Dorsolateral prefrontal cortex (tissue), 120 donors: ENCODE measurements at regions of chr14 and their contacts with region 1.

Region 1: DNA sequence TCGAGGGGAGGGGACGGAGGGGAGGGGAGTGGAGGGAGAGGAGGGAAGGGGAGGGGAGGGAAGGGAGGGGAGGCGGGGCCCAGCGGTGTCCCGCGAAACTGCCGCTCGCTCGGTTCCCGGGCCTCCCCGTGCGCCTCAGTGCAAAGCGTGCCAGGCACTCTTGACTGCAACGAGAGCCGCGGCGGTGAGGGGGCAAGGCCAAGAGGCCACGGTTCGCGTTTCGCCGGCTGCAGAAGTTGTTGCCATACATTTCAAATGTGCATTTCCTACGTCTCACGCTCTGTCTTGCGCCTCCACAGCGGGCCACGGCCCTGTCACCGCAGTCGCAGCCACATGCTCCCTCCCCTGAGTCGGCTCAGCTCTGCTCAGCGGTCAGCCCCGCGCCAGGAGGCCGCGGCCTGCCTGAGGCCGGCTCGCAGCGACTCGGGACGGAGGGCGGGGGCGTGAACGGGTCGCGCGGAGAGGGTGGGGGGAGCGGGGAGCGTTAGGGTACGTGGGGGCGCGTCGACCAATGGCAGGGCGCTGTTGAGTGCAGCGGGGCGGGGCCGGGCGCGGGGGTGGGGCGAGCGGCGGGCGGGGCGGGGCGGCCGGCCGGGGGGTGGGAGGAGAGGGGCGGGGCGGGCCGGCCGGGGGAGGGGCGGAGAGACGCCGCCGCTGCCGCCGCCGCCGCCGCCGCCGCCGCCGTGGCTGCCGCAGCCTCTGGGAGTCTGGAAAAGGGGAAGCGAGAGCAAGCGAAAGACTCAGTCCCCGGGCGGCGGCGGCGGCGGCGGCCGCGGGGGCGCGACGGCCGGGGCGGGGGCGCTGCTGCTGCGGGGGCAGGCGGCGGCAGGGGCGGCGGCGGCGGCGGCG is at the start of gene PPP2R5C:
- DNase-seq: peak; percentile 82 to 93 (median 90)
- H3K4me3 ChIP-seq: peak within 1 kb of the TSS; percentile 74 to 100 (median 97)
- H3K27ac ChIP-seq: peak within 1 kb of the TSS; percentile 68 to 100 (median 96)
- H3K27me3 ChIP-seq: no peaks in the 10 kb centered on the region
- CTCF ChIP-seq: no peak
- total RNA-seq, gene PPP2R5C: 150 to 242 (median 182) TPM

Region 2: GRCh38 chr14:101624536-101624935 is 136.7 kb before region 1 on chr14:
- intact Hi-C with region 1: no loop called
- DNase-seq: no peak
- H3K4me3 ChIP-seq: no peak overlapping the region
- H3K27ac ChIP-seq: no peak overlapping the region
- H3K27me3 ChIP-seq: no peaks in the 10 kb centered on the region
- CTCF ChIP-seq: no peak

Region 3: DNA sequence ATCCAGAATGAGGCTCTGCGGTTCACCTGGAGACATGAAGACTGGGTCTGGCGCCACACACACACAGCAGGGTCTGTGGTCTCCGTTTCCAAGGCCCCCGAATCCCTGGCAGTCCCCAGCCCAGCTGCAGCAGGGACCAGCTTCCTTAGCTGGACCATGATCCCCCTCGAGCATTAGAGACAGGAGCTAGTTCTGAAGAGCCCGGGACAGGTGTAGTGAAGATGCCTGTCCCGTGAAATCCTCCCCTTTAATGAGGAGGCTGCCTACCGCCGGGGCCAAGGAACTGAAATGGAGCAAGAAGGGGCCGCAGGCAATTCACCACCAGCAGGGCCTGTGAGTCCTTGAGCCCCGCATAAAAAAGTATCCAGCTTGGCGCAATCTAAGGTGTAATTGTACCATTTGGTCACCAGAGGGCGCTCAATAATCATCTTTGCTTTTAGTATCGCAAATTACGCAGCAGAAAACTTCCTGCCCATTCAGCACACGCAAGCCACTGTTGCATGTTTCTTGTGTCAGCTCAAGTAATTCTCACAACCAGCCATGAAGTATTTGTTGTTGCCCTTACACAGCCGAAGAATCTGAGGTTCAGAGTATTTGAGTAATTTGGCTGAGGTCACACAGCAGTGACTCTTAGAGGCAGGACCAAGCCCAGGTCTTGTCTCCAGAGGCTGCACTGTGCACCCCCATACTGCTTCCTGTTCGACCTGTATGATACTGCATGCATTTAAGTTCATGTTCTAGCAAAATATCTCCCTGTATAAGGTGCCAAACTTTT is 54.0 kb before region 1 on chr14:
- intact Hi-C with region 1: loop called (anchors 5 kb)
- DNase-seq: peak in 3 of 10 donors; percentile 27 to 61 (median 52)
- H3K4me3 ChIP-seq: peak overlapping the region in 16 of 59 donors; percentile 6 to 38 (median 22)
- H3K27ac ChIP-seq: peak overlapping the region in 11 of 59 donors; percentile 10 to 72 (median 45)
- H3K27me3 ChIP-seq: peaks cover 0 to 26% (median 7%) of the 10 kb centered on the region in 45 donors
- CTCF ChIP-seq: peak; percentile 71 to 98 (median 91)

Region 4: DNA sequence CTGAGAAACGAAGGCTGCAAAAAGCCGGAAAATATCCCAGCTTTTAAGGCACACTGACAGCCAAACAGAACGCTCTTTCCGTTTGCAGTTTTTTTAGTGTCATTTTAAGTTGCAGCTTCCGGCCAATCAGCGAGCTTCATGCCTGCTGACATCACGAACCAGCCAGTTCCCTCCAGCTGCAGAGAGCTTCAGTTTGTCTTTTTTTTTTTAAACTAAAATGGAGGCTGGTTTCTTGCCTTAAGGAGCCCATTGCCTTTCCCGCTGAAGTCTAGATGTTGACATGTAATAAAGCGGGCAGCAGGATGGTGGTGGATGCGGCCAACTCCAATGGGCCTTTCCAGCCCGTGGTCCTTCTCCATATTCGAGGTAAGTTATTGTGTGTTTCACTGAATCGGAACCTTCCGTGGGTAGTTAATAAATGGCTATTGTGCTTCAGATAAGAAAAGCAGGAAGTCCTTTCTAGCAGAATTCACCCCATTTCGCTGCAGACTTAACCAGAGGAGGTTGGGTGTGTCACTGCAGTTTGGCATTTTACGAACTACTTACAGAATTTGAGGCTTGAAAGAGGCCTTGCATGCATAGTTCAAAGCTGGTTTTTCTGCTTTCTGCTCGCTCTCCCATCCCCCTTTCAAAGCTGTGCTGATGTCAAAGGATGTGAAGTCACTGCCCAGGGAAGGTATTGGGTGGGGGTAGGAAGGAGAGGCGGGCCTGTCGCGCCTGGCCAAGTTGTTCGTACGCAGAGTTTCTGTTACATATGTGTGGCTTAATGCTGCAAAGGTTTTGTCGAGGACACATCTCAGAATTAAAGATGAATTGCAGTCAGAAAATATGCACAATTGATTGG is 48.6 kb after region 1 on chr14:
- intact Hi-C with region 1: loop called in 1 of 2 experiments (anchors 5 kb)
- DNase-seq: peak; percentile 71 to 95 (median 86)
- H3K4me3 ChIP-seq: peak overlapping the region; percentile 44 to 99 (median 74)
- H3K27ac ChIP-seq: peak overlapping the region; percentile 90 to 100 (median 98)
- H3K27me3 ChIP-seq: no peaks in the 10 kb centered on the region
- CTCF ChIP-seq: peak in 3 of 56 donors; percentile 12 to 13 (median 12)

Region 5: GRCh38 chr14:101947906-101948665 is 186.8 kb after region 1 on chr14:
- intact Hi-C with region 1: loop called in 1 of 2 experiments (anchors 1 kb)
- DNase-seq: peak; percentile 97 to 100 (median 100)
- H3K4me3 ChIP-seq: peak overlapping the region; percentile 65 to 100 (median 87)
- H3K27ac ChIP-seq: peak overlapping the region; percentile 83 to 100 (median 98)
- H3K27me3 ChIP-seq: no peaks in the 10 kb centered on the region
- CTCF ChIP-seq: peak in 26 of 56 donors; percentile 3 to 51 (median 16)